Gastrocnemius medialis (tissue), 4 donors: ENCODE measurements at regions of chr1 and their contacts with region 1.

Region 1: DNA sequence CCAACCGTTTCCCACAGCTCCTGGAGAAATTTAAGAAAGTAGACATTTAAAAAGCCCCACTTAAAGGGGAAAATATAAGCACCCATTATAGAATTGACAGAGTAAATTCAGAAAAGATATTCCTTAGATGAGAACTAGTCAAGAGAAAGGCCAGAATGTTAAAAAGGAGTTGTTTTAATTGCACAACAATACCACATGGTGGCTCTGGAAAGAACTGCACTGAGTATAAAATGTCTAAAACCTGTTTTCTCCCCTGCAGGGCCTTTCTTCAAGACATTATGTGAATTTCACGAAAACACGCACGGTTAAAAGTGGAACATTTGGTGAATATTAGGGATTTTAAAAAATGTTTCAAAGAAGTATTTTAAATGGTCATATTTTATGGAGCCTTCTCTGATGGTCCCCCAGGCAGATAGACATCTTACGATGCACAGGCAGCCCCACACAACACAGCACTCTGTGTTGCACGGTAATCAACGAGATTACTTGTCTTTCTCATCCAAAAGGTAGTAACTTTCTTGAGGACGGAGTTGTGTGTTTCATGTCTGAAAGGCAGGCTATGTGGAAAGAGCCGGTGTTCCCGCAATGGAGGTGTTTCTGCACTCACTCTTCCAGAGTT is 101.9 kb downstream of the PRRX1 start:
- DNase-seq: no peak
- ATAC-seq: peak; percentile 80 to 87
- H3K4me3 ChIP-seq: no peak overlapping the region
- H3K27ac ChIP-seq: peak overlapping the region in 2 of 4 donors; percentile 10 to 27
- H3K4me1 ChIP-seq: no peaks in the 10 kb centered on the region
- H3K27me3 ChIP-seq: no peaks in the 10 kb centered on the region
- CTCF ChIP-seq: peak; percentile 53 to 71 (median 57)
- POLR2A ChIP-seq: no peak

Region 2: GRCh38 chr1:169928438-169929209 is 837.2 kb before region 1 on chr1:
- in situ Hi-C with region 1: no loop called
- intact Hi-C with region 1: loop called (anchors 5 kb)
- DNase-seq: no peak
- ATAC-seq: peak in 1 of 2 donors; percentile 33
- H3K4me3 ChIP-seq: no peak overlapping the region
- H3K27ac ChIP-seq: no peak overlapping the region
- H3K4me1 ChIP-seq: peaks cover 0 to 6% of the 10 kb centered on the region in 2 donors
- H3K27me3 ChIP-seq: no peaks in the 10 kb centered on the region
- CTCF ChIP-seq: peak; percentile 29 to 72 (median 60)
- POLR2A ChIP-seq: no peak

Region 3: GRCh38 chr1:170321113-170321512 is 444.7 kb before region 1 on chr1:
- in situ Hi-C with region 1: no loop called
- intact Hi-C with region 1: no loop called
- DNase-seq: no peak
- ATAC-seq: no peak
- H3K4me3 ChIP-seq: no peak overlapping the region
- H3K27ac ChIP-seq: no peak overlapping the region
- H3K4me1 ChIP-seq: no peaks in the 10 kb centered on the region
- H3K27me3 ChIP-seq: no peaks in the 10 kb centered on the region
- CTCF ChIP-seq: no peak
- POLR2A ChIP-seq: no peak

Region 4: GRCh38 chr1:170531758-170532657 is 233.8 kb before region 1 on chr1 and contains the start of gene GORAB:
- in situ Hi-C with region 1: no loop called
- intact Hi-C with region 1: loop called (anchors 10 kb)
- DNase-seq: peak; percentile 81 to 84
- ATAC-seq: peak; percentile 98 to 99
- H3K4me3 ChIP-seq: peak within 1 kb of the TSS; percentile 68 to 86 (median 78)
- H3K27ac ChIP-seq: peak within 1 kb of the TSS; percentile 78 to 87 (median 82)
- H3K4me1 ChIP-seq: peaks cover 0 to 16% of the 10 kb centered on the region in 2 donors
- H3K27me3 ChIP-seq: no peaks in the 10 kb centered on the region
- CTCF ChIP-seq: no peak
- POLR2A ChIP-seq: peak; percentile 38 to 65
- total RNA-seq, gene GORAB: 1.7 to 3.8 (median 2.3) TPM

Region 5: GRCh38 chr1:170678027-170678600 is 87.7 kb before region 1 on chr1:
- in situ Hi-C with region 1: loop called in 1 of 4 experiments (anchors 25 kb)
- intact Hi-C with region 1: loop called (anchors 1 kb)
- DNase-seq: peak in 1 of 2 donors; percentile 21
- ATAC-seq: peak; percentile 61 to 66
- H3K4me3 ChIP-seq: peak overlapping the region in 2 of 4 donors; percentile 4 to 11
- H3K27ac ChIP-seq: peak overlapping the region; percentile 90 to 100 (median 96)
- H3K4me1 ChIP-seq: peaks cover 67 to 86% of the 10 kb centered on the region in 2 donors
- H3K27me3 ChIP-seq: no peaks in the 10 kb centered on the region
- CTCF ChIP-seq: no peak
- POLR2A ChIP-seq: no peak

Region 6: DNA sequence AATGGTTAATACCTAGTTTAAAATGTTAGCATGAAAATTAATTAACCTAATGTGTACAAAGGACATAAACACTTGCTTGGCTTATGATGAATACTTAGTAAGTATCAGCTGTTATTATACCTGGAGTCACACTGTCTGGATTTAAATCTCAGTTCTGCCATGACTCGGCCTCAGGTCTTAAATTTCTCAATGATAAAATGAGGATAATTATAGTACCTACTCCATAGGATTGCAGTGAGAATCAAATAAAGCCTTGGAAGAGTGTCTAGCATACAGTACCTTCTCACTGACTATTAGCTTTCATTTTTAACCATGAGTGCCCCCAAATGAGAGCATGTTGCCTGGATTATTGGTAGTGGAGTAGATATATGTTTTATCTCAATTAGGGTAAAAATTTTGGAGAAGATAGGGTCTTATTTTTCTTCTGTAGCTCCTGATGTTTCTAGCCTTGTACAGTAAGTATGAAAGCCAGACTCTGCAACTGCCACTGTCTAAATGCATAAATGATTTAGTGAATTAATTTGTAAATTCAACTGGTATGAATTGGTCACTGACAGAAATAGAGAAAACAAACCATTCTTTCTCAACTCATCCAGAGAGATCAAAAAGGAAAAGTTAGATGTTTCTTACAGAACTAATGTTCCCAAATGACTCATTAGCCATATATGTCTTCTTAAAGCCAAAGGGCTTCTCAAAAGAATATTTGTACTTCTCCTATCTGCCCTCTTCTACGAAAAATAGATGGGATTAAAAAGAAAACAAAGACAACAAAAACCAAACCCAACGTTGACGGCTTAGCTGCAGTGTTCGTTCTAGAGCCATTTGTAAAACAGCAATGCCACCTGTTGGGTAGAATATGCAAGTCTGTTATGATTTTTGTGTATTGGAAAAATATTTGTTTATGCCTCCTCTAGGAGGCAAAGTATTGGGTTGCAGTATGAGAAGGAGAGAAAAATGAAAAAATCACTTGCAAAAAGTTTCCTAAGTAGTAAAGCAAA is 115.7 kb after region 1 on chr1:
- in situ Hi-C with region 1: no loop called
- intact Hi-C with region 1: loop called (anchors 10 kb)
- DNase-seq: no peak
- ATAC-seq: peak; percentile 65 to 74
- H3K4me3 ChIP-seq: peak overlapping the region; percentile 13 to 33 (median 25)
- H3K27ac ChIP-seq: peak overlapping the region in 1 of 4 donors; percentile 32
- H3K4me1 ChIP-seq: peaks cover 0 to 3% of the 10 kb centered on the region in 2 donors
- H3K27me3 ChIP-seq: no peaks in the 10 kb centered on the region
- CTCF ChIP-seq: peak; percentile 38 to 61 (median 56)
- POLR2A ChIP-seq: no peak